Activated T-helper 1 cell treated with anti-CD3 and anti-CD28 coated beads, Interleukin-12 subunit alpha, Interleukin-12 subunit beta, Interleukin-2, Interleukin-4 antibody, amounts not matched to agents 30 ng/mL and 10 ng/mL and 1 ng/mL, durations not matched to agents 14 hours and 24 hours and 36 hours (primary cell): ENCODE measurements at regions of chr5 and their contacts with region 1.

Region 1: DNA sequence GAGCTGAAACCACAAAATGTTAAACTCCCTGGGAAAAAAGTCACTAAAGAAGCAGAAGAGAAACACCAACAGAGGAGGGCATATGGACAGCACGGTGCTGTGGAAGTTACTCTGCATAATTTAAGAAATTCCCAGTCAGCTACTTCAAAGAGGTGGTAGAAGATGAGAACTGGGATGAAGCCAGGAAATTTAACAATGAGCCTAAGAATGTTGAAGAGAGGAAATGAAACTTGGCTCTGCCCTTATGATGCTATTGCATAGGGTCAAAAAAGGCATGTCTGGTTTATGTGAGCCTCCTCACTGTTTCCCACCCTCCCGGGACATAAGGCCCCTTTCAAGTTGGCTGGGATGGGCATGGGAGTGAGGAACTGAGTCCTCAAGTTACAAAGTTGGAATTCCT is 25.4 kb upstream of the SNX18 start:
- DNase-seq: no peak
- H3K4me3 Mint-ChIP-seq: no peak overlapping the region
- H3K27ac Mint-ChIP-seq: no peak overlapping the region
- H3K4me1 Mint-ChIP-seq: no peaks in the 10 kb centered on the region
- H3K27me3 Mint-ChIP-seq: peaks cover 11% of the 10 kb centered on the region

Region 2: DNA sequence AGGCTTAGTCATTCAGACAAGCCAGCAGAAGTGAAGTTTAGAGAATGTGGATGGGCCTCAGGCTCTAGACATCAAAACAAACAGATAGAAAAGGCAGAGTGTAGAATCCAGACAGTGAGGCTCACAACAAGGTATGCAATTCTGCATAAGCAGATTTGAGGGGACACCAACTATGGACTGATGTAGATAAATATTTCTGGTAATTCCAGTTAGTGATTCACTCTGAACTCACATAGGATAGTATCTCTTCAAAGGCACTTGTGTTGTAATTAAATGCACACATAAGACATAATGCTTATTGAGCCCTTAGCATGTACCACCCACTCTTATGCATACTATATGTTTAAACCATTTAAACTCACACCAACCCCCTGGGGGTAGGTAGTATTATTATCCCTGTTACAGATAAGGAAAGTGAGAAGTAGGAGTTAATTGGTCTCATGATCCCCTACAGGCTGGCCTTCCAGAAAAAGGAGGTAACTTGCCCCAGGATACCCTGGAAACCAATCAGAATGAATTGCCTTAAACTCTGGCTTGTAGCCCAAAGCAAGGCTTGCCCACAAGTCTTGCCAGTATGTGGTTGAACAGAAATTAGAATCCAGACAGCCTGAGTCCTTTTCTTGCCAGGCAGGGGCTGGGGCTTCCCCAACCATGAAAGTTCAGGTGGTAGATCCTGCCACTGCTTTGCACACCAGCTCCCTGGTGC is 76.1 kb before region 1 on chr5:
- intact Hi-C with region 1: loop called (anchors 1 kb)
- DNase-seq: no peak
- H3K4me3 Mint-ChIP-seq: no peak overlapping the region
- H3K27ac Mint-ChIP-seq: no peak overlapping the region
- H3K4me1 Mint-ChIP-seq: no peaks in the 10 kb centered on the region
- H3K27me3 Mint-ChIP-seq: peaks cover 25% of the 10 kb centered on the region

Region 3: GRCh38 chr5:54443270-54443669 is 48.9 kb before region 1 on chr5:
- intact Hi-C with region 1: loop called (anchors 1 kb)
- DNase-seq: no peak
- H3K4me3 Mint-ChIP-seq: no peak overlapping the region
- H3K27ac Mint-ChIP-seq: no peak overlapping the region
- H3K4me1 Mint-ChIP-seq: peaks cover 32% of the 10 kb centered on the region
- H3K27me3 Mint-ChIP-seq: no peaks in the 10 kb centered on the region

Region 4: DNA sequence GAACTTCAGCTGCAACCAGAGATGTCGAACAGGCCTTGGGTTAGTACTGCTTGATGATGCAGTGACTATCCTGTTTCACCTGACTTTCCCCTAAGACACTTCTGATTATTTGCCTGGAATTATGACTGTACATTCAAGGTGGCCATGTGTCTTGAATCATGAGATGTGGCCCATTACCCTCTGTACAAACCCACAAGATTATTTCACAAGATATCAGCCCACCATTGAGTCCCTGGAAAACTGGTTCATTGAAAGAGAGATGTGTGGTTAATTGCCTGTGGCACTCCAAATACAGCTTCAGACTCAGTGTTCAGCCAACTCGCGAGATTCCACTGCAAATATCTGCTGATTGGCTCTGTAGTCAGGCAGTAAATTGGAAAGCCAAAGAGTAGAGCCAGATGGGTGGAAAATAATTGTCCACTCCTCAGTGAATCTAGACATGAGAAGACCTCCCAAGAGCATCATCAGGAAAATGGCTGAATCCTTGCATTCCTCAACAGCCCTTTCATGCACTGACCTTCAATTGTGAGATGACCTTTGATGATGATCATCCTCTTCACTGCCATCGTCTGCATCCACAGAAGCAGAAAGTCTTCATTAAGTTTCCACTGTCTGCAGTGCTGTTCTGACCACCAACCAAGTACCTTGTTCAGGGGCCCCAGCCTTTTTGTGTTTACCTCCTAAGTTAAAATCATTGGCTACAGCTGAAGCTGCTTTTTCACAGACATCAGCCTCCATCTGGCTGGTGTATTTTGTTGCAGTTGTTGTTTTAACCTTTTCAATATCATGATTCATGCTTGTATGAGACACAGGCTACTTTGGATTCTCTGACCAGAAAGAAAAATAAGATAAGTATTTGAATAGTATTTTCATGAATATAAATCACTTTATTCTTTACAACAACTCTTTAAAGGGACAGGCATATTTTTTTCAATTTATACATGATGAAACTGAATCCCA is 418.0 kb after region 1 on chr5:
- intact Hi-C with region 1: no loop called
- DNase-seq: no peak
- H3K4me3 Mint-ChIP-seq: no peak overlapping the region
- H3K27ac Mint-ChIP-seq: no peak overlapping the region
- H3K4me1 Mint-ChIP-seq: peaks cover 27% of the 10 kb centered on the region
- H3K27me3 Mint-ChIP-seq: peaks cover 37% of the 10 kb centered on the region